ENCODE measurements at regions of chr12 and their contacts with region 1.

Region 1: GRCh38 chr12:49776413-49776812 is 35.1 kb downstream of the TMBIM6 start:
- DNase-seq: peak; percentile 45
- H3K4me3 Mint-ChIP-seq: no peak overlapping the region
- H3K27ac Mint-ChIP-seq: peak overlapping the region; percentile 54
- H3K4me1 Mint-ChIP-seq: peaks cover 13% of the 10 kb centered on the region
- H3K27me3 Mint-ChIP-seq: peaks cover 20% of the 10 kb centered on the region

Region 2: GRCh38 chr12:49462083-49462744 is 314.2 kb before region 1 on chr12:
- intact Hi-C with region 1: no loop called
- DNase-seq: no peak
- H3K4me3 Mint-ChIP-seq: no peak overlapping the region
- H3K27ac Mint-ChIP-seq: no peak overlapping the region
- H3K4me1 Mint-ChIP-seq: no peaks in the 10 kb centered on the region
- H3K27me3 Mint-ChIP-seq: no peaks in the 10 kb centered on the region

Region 3: DNA sequence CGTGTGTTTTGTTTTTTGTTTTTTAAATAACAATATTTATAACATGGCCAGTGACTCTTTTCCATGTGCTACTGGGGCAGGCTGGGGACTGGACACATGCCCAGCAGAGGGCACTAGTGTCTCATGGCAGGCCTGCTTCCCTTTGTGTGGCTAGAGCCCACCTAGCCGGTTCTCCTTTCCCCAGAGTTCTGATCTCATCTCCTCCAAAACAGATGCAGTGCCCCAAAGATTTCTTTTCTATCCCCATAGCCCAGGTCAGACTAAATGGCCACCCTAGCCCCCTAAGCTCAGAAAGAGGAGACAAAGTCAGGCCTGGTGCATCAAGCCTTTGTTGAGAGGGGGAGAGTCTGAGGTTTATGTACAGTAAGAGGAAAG is 131.8 kb before region 1 on chr12:
- intact Hi-C with region 1: loop called (anchors 1 kb)
- DNase-seq: peak; percentile 60
- H3K4me3 Mint-ChIP-seq: no peak overlapping the region
- H3K27ac Mint-ChIP-seq: peak overlapping the region; percentile 68
- H3K4me1 Mint-ChIP-seq: peaks cover 10% of the 10 kb centered on the region
- H3K27me3 Mint-ChIP-seq: no peaks in the 10 kb centered on the region

Region 4: GRCh38 chr12:49740930-49741881 is 35.2 kb before region 1 on chr12 and contains the start of gene TMBIM6:
- intact Hi-C with region 1: loop called (anchors 1 kb)
- DNase-seq: peak; percentile 99
- H3K4me3 Mint-ChIP-seq: peak within 1 kb of the TSS; percentile 88
- H3K27ac Mint-ChIP-seq: peak within 1 kb of the TSS; percentile 96
- H3K4me1 Mint-ChIP-seq: peaks cover 27% of the 10 kb centered on the region
- H3K27me3 Mint-ChIP-seq: peaks cover 4% of the 10 kb centered on the region
- total RNA-seq, gene TMBIM6: 405 and 431 TPM in 2 replicates

Region 5: GRCh38 chr12:49763006-49763591 is 13.3 kb before region 1 on chr12:
- intact Hi-C with region 1: loop called (anchors 1 kb)
- DNase-seq: peak; percentile 72
- H3K4me3 Mint-ChIP-seq: peak overlapping the region; percentile 49
- H3K27ac Mint-ChIP-seq: peak overlapping the region; percentile 91
- H3K4me1 Mint-ChIP-seq: peaks cover 53% of the 10 kb centered on the region
- H3K27me3 Mint-ChIP-seq: no peaks in the 10 kb centered on the region

Region 6: DNA sequence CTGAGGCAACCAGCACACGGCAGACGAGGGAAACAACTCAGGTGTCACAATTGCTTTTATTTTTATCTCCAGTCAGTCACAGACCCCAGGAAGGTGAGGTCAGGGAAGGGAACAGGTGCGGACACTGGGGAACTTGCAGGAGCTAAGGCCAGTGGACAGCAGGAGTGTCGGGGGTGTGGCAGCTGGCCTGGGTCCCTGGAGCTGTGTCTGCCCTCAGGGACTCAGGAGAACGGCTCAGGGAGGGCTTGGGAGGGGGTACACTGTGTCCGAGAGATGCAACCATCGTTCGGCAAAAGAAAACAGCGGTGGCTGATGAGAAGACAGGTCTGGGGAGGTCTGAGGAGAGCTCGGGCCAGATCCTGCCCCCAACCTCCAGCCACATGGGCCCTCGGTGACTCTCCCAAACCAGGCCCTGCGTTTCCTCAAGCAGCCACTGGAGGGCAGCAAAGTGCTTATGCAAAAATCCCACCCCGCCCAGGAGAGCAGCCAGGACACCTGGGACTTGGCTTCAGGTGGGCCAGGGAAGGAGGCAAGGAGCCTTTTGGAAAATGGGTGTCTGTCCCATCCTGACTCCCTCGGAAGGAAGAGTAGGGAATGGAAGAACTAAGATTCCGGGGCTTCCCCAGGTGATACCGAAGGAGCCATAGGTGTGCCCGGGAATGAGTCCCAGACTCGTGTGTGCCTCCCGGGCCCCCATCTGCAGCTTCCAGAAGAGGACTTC is 90.6 kb after region 1 on chr12:
- intact Hi-C with region 1: loop called (anchors 1 kb)
- DNase-seq: peak; percentile 59
- H3K4me3 Mint-ChIP-seq: no peak overlapping the region
- H3K27ac Mint-ChIP-seq: no peak overlapping the region
- H3K4me1 Mint-ChIP-seq: no peaks in the 10 kb centered on the region
- H3K27me3 Mint-ChIP-seq: no peaks in the 10 kb centered on the region

Measured in activated T-helper 2 cell treated with anti-CD3 and anti-CD28 coated beads, Interferon-gamma antibody, Interleukin-2, Interleukin-4, amounts not matched to agents 10 μg/mL and 5 μg/mL and 100 μg/mL, durations not matched to agents 14 hours and 24 hours and 36 hours (primary cell).